Activated naive CD4-positive, alpha-beta T cell treated with anti-CD3 and anti-CD28 coated beads for 36 hours (primary cell): ENCODE measurements at regions of chr6 and their contacts with region 1.

Region 1: GRCh38 chr6:111823831-111824607 is 49.2 kb downstream of the FYN start:
- DNase-seq: no peak
- H3K4me3 Mint-ChIP-seq: peak overlapping the region; percentile 39
- H3K27ac Mint-ChIP-seq: peak overlapping the region; percentile 89
- H3K4me1 Mint-ChIP-seq: peaks cover 83% of the 10 kb centered on the region
- H3K27me3 Mint-ChIP-seq: no peaks in the 10 kb centered on the region

Region 2: DNA sequence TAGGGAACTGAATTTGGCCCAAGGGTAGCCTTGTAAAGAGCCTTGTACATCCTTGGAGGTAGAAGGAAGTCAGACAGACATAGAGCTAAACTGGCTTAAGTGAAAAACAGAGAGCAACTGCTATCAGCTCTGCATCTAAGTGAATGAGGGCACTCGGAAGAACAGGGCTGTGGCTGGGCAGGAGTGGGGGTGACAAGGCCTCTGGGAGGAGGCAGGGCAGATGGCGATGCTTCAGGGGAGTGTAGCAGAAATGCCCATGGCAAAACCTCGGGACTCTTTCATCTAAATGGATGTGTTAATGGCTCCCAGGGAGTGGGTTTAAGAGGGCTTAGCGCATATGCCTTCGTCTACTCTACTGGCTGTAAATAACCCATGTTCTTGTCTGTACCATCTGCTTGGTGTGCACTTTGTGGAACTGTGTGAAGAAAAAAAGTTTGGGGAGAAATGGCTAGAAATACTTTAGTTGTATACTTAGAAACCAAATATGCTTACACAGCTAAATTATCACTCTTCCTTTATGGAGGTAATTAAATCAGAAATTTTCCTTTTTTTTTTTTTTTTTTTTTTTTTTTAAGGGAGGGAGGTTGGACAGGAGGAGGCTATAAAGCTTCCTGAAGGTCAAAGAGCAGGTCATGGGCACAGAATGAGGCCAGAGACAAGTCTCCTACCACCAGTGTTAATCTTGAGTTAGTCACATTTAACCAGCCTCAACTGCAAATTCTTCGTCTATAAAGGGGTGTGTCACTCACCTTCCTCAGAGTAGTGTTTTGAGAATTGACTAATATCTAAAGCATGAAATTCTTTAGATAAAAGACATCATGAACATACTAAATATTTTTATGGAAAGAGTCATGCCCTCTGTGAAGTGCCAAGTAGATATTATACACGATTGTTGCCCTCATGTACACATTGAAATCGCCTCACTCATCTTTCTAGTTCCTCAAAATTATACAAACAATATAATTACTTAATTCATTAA is 11.7 kb before region 1 on chr6:
- CTCF ChIA-PET with region 1: interaction called, 15 read pairs
- intact Hi-C with region 1: loop called (anchors 1 kb)
- DNase-seq: no peak
- H3K4me3 Mint-ChIP-seq: no peak overlapping the region
- H3K27ac Mint-ChIP-seq: peak overlapping the region; percentile 93
- H3K4me1 Mint-ChIP-seq: peaks cover 82% of the 10 kb centered on the region
- H3K27me3 Mint-ChIP-seq: no peaks in the 10 kb centered on the region

Region 3: DNA sequence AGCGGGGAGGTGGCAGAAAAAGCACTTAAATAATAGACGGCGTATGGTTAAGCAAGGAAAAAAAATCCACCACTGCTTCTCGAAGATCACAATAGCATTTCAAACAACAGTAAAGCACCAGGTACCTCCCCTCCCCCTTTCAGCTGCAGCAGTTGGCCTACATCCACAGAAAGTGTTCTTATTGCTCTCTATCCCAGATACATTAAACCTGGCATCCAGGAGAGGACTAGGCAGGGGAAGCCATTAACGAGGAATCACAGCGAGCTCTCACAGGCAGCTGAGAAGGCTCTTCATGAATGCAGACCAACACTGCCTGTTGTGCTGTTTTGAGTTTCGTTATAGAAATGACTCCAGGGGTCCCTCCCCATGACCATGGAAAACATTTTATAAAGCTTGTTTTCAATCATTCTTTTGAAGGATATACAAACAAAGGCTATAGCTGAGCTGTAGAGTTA is 37.4 kb after region 1 on chr6:
- CTCF ChIA-PET with region 1: interaction called, 3 read pairs
- intact Hi-C with region 1: loop called (anchors 1 kb)
- DNase-seq: peak; percentile 55
- H3K4me3 Mint-ChIP-seq: no peak overlapping the region
- H3K27ac Mint-ChIP-seq: peak overlapping the region; percentile 72
- H3K4me1 Mint-ChIP-seq: peaks cover 99% of the 10 kb centered on the region
- H3K27me3 Mint-ChIP-seq: no peaks in the 10 kb centered on the region